ENCODE measurements at regions of chr15 and their contacts with region 1.

Region 1: GRCh38 chr15:66630801-66631351 is 65.1 kb upstream of the LCTL start:
- DNase-seq: no peak
- H3K4me3 ChIP-seq: no peak overlapping the region
- H3K27ac ChIP-seq: no peak overlapping the region
- H3K4me1 ChIP-seq: no peaks in the 10 kb centered on the region
- H3K27me3 ChIP-seq: no peaks in the 10 kb centered on the region
- CTCF ChIP-seq: no peak
- POLR2A ChIP-seq: no peak

Region 2: GRCh38 chr15:66644869-66645268 is 14.0 kb after region 1 on chr15:
- CTCF ChIA-PET with region 1: interaction called, 3 read pairs
- POLR2A ChIA-PET with region 1: no interaction called
- dilution Hi-C with region 1: no loop called
- intact Hi-C with region 1: loop called (anchors 2 kb)
- DNase-seq: peak; percentile 74
- H3K4me3 ChIP-seq: no peak overlapping the region
- H3K27ac ChIP-seq: peak overlapping the region; percentile 93
- H3K4me1 ChIP-seq: peaks cover 47% of the 10 kb centered on the region
- H3K27me3 ChIP-seq: no peaks in the 10 kb centered on the region
- CTCF ChIP-seq: no peak
- POLR2A ChIP-seq: no peak